Activated CD8-positive, alpha-beta T cell treated with anti-CD3 and anti-CD28 coated beads for 36 hours (primary cell): ENCODE measurements at regions of chr1 and their contacts with region 1.

Region 1: GRCh38 chr1:22976461-22977243 is 4.0 kb upstream of the LACTBL1 start:
- DNase-seq: peak; percentile 73
- ATAC-seq: peak; percentile 100
- H3K4me3 Mint-ChIP-seq: no peak overlapping the region
- H3K27ac Mint-ChIP-seq: no peak overlapping the region
- H3K4me1 Mint-ChIP-seq: no peaks in the 10 kb centered on the region
- H3K27me3 Mint-ChIP-seq: peaks cover 14% of the 10 kb centered on the region
- CTCF ChIP-seq: peak; percentile 59

Region 2: DNA sequence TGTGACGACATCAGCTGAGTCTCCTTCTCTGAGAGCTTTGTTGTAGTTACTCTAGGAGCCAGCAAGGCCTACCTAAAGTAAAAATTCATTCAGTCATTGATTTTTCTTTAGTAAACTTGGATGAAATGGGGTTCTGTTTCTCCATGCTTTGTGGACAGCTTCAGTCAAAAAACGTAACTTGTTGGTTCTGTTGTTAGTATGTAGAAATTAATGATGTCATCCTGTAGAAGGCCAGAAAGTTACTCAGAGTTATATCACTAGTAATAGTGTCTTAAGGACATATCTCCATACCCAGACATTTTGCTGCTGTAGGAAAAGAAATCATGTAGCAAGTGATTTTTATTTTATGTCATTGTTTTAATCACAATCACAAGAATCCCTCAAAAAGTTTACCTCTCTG is 85.6 kb after region 1 on chr1:
- CTCF ChIA-PET with region 1: no interaction called
- POLR2A ChIA-PET with region 1: no interaction called
- intact Hi-C with region 1: no loop called
- DNase-seq: no peak
- ATAC-seq: no peak
- H3K4me3 Mint-ChIP-seq: no peak overlapping the region
- H3K27ac Mint-ChIP-seq: no peak overlapping the region
- H3K4me1 Mint-ChIP-seq: peaks cover 5% of the 10 kb centered on the region
- H3K27me3 Mint-ChIP-seq: no peaks in the 10 kb centered on the region
- CTCF ChIP-seq: no peak

Region 3: GRCh38 chr1:23081376-23081775 is 104.7 kb after region 1 on chr1:
- CTCF ChIA-PET with region 1: no interaction called
- POLR2A ChIA-PET with region 1: no interaction called
- intact Hi-C with region 1: loop called (anchors 5 kb)
- DNase-seq: no peak
- ATAC-seq: peak; percentile 39
- H3K4me3 Mint-ChIP-seq: no peak overlapping the region
- H3K27ac Mint-ChIP-seq: peak overlapping the region; percentile 13
- H3K4me1 Mint-ChIP-seq: no peaks in the 10 kb centered on the region
- H3K27me3 Mint-ChIP-seq: no peaks in the 10 kb centered on the region
- CTCF ChIP-seq: peak; percentile 18